ENCODE measurements at regions of chr10 and their contacts with region 1.

Region 1: DNA sequence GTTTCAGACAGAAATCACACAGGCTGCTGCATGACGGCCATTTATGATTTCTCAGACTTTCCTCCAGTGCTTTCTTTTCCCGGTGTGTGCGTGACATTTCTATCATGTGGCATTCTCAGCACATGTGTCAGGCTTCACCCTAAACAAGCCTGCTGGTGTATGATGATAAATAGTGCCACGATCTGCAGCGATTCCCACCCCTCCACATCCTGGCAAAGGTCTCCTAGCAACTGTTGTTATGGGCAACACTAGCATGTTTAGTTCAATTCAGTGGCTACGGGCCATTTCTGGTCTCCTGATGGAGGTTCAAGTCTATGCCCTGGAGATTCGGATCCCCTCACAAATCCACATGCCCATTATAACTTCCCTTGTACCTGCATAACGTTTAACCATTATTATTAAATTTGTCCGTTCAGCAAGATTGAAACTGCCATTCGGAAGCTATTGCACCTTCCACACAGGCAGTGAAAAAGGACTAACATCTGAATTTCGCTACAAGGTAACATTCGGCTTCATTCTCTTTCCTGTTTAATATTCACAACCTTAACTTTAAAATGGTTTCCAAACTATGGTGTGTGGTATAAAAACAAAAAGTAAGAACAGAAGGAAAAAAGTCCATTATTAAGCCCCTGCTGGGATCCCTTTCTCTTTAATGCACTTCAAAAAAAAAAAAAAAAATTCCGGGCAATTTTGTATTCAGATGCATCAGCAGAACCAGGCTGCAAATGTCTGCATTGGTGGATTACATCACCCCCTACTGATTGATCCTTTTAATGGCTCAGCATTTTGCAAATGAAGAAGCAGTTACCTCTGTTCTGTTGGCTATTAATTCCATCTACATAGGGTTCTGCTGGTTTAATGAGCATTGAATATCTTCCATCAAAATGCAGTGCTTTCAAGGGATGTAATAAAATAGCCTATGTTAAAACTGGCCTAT is 90.2 kb downstream of the FRMD4A start:
- DNase-seq: no peak
- ATAC-seq: no peak
- H3K4me3 ChIP-seq: no peak overlapping the region
- H3K27ac ChIP-seq: no peak overlapping the region
- H3K4me1 ChIP-seq: no peaks in the 10 kb centered on the region
- H3K27me3 ChIP-seq: no peaks in the 10 kb centered on the region; a peak in 1 of 5 replicates
- CTCF ChIP-seq: no peak
- EP300 ChIP-seq: no peak
- POLR2A ChIP-seq: no peak
- RAD21 ChIP-seq: no peak

Region 2: GRCh38 chr10:13787015-13787421 is 453.5 kb before region 1 on chr10:
- CTCF ChIA-PET with region 1: no interaction called
- POLR2A ChIA-PET with region 1: no interaction called
- in situ Hi-C with region 1: no loop called
- intact Hi-C with region 1: loop called (anchors 5 kb)
- DNase-seq: no peak
- ATAC-seq: no peak
- H3K4me3 ChIP-seq: no peak overlapping the region
- H3K27ac ChIP-seq: no peak overlapping the region
- H3K4me1 ChIP-seq: no peaks in the 10 kb centered on the region
- H3K27me3 ChIP-seq: peaks cover 2 to 23% of the 10 kb centered on the region in 2 experiments; a peak in 2 of 5 replicates
- CTCF ChIP-seq: no peak
- EP300 ChIP-seq: no peak
- POLR2A ChIP-seq: no peak
- RAD21 ChIP-seq: no peak

Region 3: DNA sequence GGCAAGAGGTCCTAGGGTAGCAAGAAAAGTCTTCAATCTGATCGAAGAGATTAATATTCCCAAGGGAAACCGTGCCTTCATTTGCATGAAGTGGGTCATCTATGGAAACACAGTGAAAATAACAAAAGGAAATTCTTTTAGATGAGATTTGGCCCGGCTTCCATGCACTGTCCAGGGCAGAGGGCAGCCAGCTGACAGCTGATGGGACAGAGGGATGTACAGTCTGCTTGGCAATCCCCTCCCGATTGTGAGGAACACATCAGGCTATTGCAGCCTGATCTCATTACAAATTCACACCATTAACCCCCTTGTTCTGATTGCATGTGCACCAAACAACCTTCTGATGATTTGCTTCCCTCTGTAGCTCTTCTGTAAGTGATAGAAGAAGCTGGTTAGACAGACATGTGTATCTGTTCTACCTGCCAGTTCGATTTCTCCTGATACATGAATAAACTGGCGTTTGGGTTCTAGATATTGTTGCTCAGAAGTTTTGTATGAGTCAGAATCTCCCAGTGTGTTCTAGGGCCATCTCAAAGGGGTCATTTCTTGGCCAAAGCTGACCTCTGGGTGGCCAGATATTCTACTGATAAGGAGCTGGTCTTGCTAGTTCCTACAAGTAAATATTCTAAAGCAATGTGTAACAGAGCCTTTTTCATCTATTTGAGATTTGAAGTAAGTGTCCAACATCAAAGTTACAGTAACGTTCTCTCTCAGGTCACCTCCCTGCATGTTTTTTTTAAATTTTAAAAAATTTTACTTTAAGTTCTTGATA is 15.0 kb before region 1 on chr10:
- CTCF ChIA-PET with region 1: no interaction called
- POLR2A ChIA-PET with region 1: no interaction called
- in situ Hi-C with region 1: no loop called
- intact Hi-C with region 1: no loop called
- DNase-seq: no peak
- ATAC-seq: no peak
- H3K4me3 ChIP-seq: no peak overlapping the region
- H3K27ac ChIP-seq: no peak overlapping the region
- H3K4me1 ChIP-seq: no peaks in the 10 kb centered on the region
- H3K27me3 ChIP-seq: no peaks in the 10 kb centered on the region; a peak in 1 of 5 replicates
- CTCF ChIP-seq: no peak
- EP300 ChIP-seq: no peak
- POLR2A ChIP-seq: no peak
- RAD21 ChIP-seq: no peak

Measured in HepG2 (cell line).